GM13976 (cell line): ENCODE measurements at regions of chr3 and their contacts with region 1.

Region 1: DNA sequence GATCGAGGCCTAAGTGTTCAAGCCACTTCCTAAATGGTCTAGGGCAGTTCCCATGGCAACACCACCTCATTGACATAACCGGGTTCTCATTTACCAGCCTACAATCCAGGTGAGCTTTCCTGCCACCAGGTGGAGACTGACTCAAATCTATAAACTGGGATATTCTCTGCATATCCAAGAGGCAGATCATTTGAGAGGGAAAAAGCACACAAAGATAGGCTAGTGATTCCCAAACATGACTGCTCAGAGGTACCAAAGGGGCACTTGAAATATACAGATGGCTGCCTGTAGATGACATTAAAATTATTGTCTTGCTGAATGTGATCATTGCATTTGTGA is 141.3 kb upstream of the PROK2 start:
- DNase-seq: peak; percentile 44
- CTCF ChIP-seq: no peak

Region 2: GRCh38 chr3:72270072-72270681 is 343.9 kb after region 1 on chr3:
- in situ Hi-C with region 1: loop called (anchors 25 kb)
- DNase-seq: no peak
- CTCF ChIP-seq: no peak